ENCODE measurements at regions of chr7 and their contacts with region 1.

Region 1: DNA sequence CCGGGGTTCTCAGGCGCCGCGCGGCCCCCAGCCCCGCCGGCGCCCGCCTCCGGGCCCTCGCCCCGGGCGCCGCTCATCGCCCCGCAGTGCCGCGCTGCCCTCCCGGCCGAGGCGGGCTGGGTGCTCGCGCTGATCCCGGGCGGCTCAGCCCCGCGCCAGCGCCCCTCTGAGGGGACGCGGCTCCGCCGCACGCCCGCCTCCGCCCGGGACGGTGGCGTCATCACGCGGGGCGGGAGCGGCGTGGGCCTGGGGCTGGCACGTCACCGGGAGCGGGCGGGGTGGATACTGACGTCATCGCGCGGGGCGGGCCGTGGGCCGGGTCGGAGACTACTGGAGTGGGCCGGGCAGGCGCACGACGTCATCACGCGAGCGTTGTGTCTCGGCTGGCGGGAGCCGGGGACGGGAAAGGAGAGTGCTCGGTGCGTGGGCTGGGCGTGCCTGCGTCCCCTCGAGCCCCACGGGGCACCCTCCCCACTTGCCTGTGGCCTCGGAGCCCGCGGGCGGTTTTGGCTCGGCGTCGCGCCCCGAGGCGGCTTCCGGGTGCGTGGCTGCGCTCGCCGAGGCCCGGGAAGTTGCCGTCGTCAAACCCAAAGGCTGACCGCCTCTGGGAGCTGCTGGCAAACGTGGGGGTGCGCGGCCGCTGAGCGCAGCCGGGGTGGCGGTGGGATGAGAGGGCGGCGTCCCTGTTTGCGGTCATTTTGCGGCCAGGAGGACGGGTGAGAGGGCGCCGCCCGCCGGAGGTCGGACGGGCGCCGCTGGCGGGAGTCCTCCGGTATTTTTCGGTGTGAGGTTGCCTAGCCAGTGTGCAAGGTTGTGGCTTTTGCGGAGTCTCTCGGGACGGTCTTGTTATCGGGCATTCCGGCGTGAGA is at the start of gene ESYT2:
- DNase-seq: peak; percentile 94
- H3K4me3 Mint-ChIP-seq: peak within 1 kb of the TSS; percentile 87
- H3K27ac Mint-ChIP-seq: peak within 1 kb of the TSS; percentile 81
- H3K4me1 Mint-ChIP-seq: peaks cover 15% of the 10 kb centered on the region
- H3K27me3 Mint-ChIP-seq: no peaks in the 10 kb centered on the region
- CTCF ChIP-seq: no peak
- total RNA-seq, gene ESYT2: 74.1 and 78.6 TPM in 2 replicates

Region 2: DNA sequence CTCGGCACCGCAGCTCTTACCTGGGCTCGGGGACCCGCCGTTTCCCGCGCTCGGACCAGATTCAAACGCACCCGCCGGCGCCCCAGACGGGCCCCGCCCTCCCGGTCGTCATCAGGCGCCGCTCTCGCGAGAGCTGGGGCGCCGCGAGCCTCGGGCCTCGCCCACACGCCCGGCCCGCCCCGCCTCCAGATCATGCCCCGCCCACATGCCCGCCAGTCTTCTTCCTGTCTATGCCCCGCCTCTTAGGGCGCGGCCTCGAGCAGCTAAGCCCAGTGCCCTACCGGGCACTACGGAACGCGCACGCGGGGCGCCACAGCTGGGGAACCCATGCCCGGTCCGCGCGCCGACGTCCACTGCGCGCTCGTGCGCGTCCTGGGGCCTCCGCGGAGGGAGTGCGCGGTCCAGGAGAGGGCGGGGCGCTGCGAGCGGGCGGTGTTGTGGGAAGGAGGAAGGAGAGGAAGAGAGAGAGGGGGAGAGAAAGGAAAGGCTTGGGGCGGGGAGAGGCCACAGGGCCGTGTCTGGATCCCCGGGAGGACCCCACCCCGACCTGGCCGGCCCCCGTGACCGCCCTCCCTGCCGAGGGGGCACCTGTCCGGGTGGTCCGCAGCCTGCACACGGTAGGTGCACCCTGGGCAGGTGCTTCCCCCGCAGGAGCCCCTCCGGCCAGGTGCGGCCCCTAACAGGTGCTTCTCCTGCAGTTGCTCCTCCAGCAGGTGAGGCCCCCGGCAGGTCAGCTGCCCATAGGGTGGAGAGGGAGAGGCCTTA is 124.7 kb before region 1 on chr7 and contains the start of gene NCAPG2:
- CTCF ChIA-PET with region 1: no interaction called
- POLR2A ChIA-PET with region 1: interaction called, 3 read pairs
- intact Hi-C with region 1: loop called (anchors 5 kb)
- DNase-seq: peak; percentile 98
- H3K4me3 Mint-ChIP-seq: peak within 1 kb of the TSS; percentile 88
- H3K27ac Mint-ChIP-seq: peak within 1 kb of the TSS; percentile 86
- H3K4me1 Mint-ChIP-seq: peaks cover 26% of the 10 kb centered on the region
- H3K27me3 Mint-ChIP-seq: no peaks in the 10 kb centered on the region
- CTCF ChIP-seq: no peak
- total RNA-seq, gene NCAPG2: 10.5 and 27.4 TPM in 2 replicates

Region 3: DNA sequence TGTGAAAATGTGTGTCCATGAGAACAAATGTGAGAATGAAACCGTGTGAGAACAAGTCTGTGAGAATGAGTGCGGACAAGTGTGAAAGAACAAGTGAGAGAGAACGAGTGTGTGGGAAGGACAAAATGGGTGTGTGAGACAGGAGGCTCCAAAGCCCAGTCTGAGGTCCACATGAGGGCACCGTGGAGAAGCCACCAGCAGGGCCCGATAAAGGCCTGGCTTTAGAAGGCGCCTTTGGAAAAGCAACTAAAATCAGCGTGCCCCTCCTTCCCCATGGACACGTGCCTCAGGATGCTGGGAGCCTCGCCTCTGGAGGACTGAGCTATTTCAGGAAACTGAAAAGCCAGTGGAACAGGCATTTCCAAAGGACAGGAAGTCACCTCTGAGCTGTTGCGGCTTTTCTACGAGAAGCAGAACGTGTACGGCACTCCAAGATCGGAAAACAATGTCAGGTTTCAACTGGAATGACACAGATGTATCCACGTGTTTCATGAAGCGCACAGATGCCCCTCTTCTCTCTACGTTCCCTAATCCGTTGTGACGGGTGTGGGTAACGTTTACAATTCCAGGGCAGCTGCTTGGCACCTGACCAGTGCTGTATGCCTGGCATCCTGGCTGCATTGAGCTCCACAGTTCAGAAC is 46.7 kb before region 1 on chr7:
- CTCF ChIA-PET with region 1: interaction called, 3 read pairs
- POLR2A ChIA-PET with region 1: interaction called, 3 read pairs
- intact Hi-C with region 1: loop called (anchors 2 kb)
- DNase-seq: peak; percentile 51
- H3K4me3 Mint-ChIP-seq: no peak overlapping the region
- H3K27ac Mint-ChIP-seq: no peak overlapping the region
- H3K4me1 Mint-ChIP-seq: no peaks in the 10 kb centered on the region
- H3K27me3 Mint-ChIP-seq: no peaks in the 10 kb centered on the region
- CTCF ChIP-seq: peak; percentile 25

Region 4: DNA sequence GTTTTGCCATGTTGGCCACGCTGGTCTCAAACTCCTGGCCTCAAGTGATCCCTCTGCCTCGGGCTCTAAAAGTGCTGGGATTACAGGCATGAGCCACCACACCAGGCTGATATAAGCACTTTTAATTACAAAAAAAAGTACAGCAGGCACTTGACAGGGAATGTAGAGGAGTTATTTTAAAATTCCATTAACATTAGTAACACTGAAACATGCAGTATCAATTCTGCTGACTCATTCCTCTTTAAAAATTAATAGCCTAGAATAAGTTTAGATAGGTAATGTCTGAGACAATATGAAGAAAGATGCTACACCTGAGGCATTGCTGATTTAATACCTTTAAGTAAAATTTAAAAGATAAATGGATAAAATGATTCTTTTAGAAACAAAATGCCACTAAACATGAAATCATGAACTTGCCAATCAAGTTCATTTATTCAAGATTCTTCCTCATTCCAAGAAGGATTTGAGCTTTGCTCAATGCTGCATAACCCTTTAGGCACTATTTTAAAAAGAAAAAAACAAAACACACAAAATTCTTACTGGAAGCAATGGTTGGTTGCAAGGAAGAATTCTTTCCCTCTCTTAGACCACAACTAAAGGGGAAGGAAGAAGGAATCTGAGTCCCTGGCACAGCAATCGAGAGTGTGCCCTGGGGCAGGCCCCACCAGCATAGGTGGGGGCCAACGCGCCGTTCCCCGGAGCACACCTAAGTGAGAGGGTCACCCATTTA is 26.9 kb before region 1 on chr7:
- CTCF ChIA-PET with region 1: no interaction called
- POLR2A ChIA-PET with region 1: interaction called, 9 read pairs
- intact Hi-C with region 1: loop called (anchors 1 kb)
- DNase-seq: no peak
- H3K4me3 Mint-ChIP-seq: peak overlapping the region; percentile 25
- H3K27ac Mint-ChIP-seq: peak overlapping the region; percentile 77
- H3K4me1 Mint-ChIP-seq: peaks cover 10% of the 10 kb centered on the region
- H3K27me3 Mint-ChIP-seq: no peaks in the 10 kb centered on the region
- CTCF ChIP-seq: no peak

Region 5: DNA sequence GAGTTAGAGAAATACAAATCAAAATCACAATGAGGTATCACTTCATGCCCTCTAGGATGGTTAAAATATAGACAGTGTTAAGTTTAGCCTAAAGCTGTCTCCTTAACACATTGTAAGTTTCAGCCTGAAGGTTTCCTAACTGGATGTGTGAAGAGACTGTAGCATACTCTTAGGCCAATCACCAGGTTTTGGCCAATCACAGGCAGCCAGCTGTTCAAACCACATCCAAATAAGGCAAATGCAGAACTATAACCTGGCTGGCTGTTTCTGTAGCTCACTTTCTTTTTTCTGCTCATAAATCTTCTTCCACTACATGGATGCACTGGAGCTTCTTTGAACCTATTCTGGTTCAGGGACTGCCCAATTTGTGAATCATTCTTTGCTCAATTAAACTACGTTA is 20.0 kb before region 1 on chr7:
- CTCF ChIA-PET with region 1: interaction called, 4 read pairs
- POLR2A ChIA-PET with region 1: interaction called, 112 read pairs
- intact Hi-C with region 1: no loop called
- DNase-seq: no peak
- H3K4me3 Mint-ChIP-seq: no peak overlapping the region
- H3K27ac Mint-ChIP-seq: peak overlapping the region; percentile 22
- H3K4me1 Mint-ChIP-seq: peaks cover 39% of the 10 kb centered on the region
- H3K27me3 Mint-ChIP-seq: no peaks in the 10 kb centered on the region
- CTCF ChIP-seq: no peak

Region 6: GRCh38 chr7:158818325-158819213 is 11.0 kb before region 1 on chr7:
- CTCF ChIA-PET with region 1: interaction called, 7 read pairs
- POLR2A ChIA-PET with region 1: interaction called, 112 read pairs
- intact Hi-C with region 1: loop called (anchors 1 kb)
- DNase-seq: peak; percentile 97
- H3K4me3 Mint-ChIP-seq: peak overlapping the region; percentile 76
- H3K27ac Mint-ChIP-seq: peak overlapping the region; percentile 99
- H3K4me1 Mint-ChIP-seq: peaks cover 60% of the 10 kb centered on the region
- H3K27me3 Mint-ChIP-seq: no peaks in the 10 kb centered on the region
- CTCF ChIP-seq: no peak

Region 7: GRCh38 chr7:158856883-158857668 is 27.5 kb after region 1 on chr7:
- CTCF ChIA-PET with region 1: interaction called, 4 read pairs
- POLR2A ChIA-PET with region 1: interaction called, 8 read pairs
- intact Hi-C with region 1: loop called (anchors 2 kb)
- DNase-seq: no peak
- H3K4me3 Mint-ChIP-seq: peak overlapping the region; percentile 99
- H3K27ac Mint-ChIP-seq: peak overlapping the region; percentile 97
- H3K4me1 Mint-ChIP-seq: peaks cover 5% of the 10 kb centered on the region
- H3K27me3 Mint-ChIP-seq: no peaks in the 10 kb centered on the region
- CTCF ChIP-seq: no peak

Region 8: GRCh38 chr7:159197066-159197975 is 367.7 kb after region 1 on chr7:
- CTCF ChIA-PET with region 1: no interaction called
- POLR2A ChIA-PET with region 1: no interaction called
- intact Hi-C with region 1: no loop called
- DNase-seq: peak; percentile 74
- H3K4me3 Mint-ChIP-seq: no peak overlapping the region
- H3K27ac Mint-ChIP-seq: no peak overlapping the region
- H3K4me1 Mint-ChIP-seq: peaks cover 18% of the 10 kb centered on the region
- H3K27me3 Mint-ChIP-seq: no peaks in the 10 kb centered on the region
- CTCF ChIP-seq: no peak

Measured in MCF 10A (cell line).